HEK293 (cell line): ENCODE measurements at regions of chr15 and their contacts with region 1.

Region 1: GRCh38 chr15:77543159-77543882 is 89.4 kb downstream of the LINGO1 start:
- H3K4me3 ChIP-seq: peak overlapping the region; percentile 44
- H3K27ac ChIP-seq: peak overlapping the region; percentile 54; the same call in 1 of the 2 replicates
- H3K4me1 ChIP-seq: no peaks in the 10 kb centered on the region
- CTCF ChIP-seq: peak; percentile 99

Region 2: DNA sequence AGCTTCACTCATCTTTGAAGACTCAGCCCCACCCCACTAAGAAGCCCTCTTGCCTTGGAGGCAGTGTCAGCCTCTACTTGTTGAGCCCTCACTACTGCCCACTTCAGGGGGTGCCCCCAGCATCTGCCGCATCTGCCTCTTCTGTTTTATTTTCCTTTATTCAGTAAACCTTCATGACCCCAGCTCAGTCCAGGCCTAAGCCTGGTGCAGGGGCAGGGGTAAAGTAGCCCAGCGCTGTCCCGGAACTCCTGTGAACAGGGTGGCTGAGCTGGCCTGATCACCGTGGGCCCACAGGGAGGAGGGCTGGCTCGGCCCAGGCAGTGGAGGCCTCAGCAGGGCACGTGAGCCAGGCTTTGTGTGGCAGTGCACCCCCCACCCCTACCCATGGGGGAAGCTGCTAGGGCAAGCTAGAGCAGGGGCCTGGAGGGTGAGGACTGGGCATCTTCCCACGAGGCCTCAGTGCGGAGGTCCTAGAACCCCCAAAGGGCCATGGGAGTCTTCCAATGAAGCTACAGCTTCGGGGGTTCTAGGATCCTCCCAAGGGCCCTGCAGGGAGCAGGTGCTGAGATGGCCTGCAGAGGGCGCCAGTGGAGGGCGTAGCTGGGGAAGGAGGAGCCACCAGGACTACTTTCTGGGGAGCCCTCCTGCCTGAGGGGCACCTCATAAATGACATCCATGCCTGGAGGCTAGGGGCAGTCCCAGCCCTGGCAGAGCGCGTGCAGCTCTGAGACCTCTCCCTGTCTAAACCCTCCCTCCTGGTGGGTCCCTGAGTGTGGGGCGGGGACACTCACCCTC is 508.4 kb before region 1 on chr15:
- CTCF ChIA-PET with region 1: interaction called, 13 read pairs
- POLR2A ChIA-PET with region 1: no interaction called
- H3K4me3 ChIP-seq: no peak overlapping the region
- H3K27ac ChIP-seq: no peak overlapping the region
- H3K4me1 ChIP-seq: no peaks in the 10 kb centered on the region
- CTCF ChIP-seq: peak; percentile 72

Region 3: DNA sequence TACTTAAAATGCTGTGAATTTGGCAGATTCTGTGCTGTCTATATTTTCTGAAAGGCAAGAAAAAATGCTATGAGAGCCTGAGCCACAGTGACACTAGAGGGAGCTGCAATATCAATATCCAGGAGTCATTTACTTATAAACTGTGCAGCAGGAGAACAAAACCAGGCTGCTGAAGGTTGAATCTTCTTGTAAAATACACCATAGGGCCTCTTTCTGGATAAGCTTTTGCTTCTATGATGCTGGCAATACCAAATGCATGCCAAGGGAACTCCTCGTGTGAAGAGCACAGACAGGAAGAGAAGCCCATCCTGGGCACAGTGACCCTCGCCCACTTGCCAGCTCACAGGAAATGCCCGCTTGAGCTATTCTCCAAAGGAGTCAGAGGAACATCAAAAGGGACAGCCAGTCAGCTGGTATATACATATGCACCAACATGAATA is 424.4 kb before region 1 on chr15:
- CTCF ChIA-PET with region 1: interaction called, 131 read pairs
- POLR2A ChIA-PET with region 1: interaction called, 8 read pairs
- H3K4me3 ChIP-seq: no peak overlapping the region
- H3K27ac ChIP-seq: no peak overlapping the region
- H3K4me1 ChIP-seq: no peaks in the 10 kb centered on the region
- CTCF ChIP-seq: peak; percentile 25; the same call in 1 of the 2 replicates

Region 4: GRCh38 chr15:77186594-77187011 is 356.7 kb before region 1 on chr15:
- CTCF ChIA-PET with region 1: interaction called, 43 read pairs
- POLR2A ChIA-PET with region 1: interaction called, 4 read pairs
- H3K4me3 ChIP-seq: no peak overlapping the region
- H3K27ac ChIP-seq: no peak overlapping the region
- H3K4me1 ChIP-seq: peaks cover 2% of the 10 kb centered on the region; the same call in 1 of the 2 replicates
- CTCF ChIP-seq: peak; percentile 72

Region 5: GRCh38 chr15:77507911-77508310 is 35.4 kb before region 1 on chr15:
- CTCF ChIA-PET with region 1: interaction called, 10 read pairs
- POLR2A ChIA-PET with region 1: no interaction called
- H3K4me3 ChIP-seq: no peak overlapping the region
- H3K27ac ChIP-seq: no peak overlapping the region
- H3K4me1 ChIP-seq: no peaks in the 10 kb centered on the region
- CTCF ChIP-seq: no peak

Region 6: GRCh38 chr15:77568973-77569728 is 25.8 kb after region 1 on chr15:
- CTCF ChIA-PET with region 1: interaction called, 33 read pairs
- POLR2A ChIA-PET with region 1: no interaction called
- H3K4me3 ChIP-seq: no peak overlapping the region
- H3K27ac ChIP-seq: no peak overlapping the region
- H3K4me1 ChIP-seq: peaks cover 4% of the 10 kb centered on the region; the same call in 1 of the 2 replicates
- CTCF ChIP-seq: no peak

Region 7: DNA sequence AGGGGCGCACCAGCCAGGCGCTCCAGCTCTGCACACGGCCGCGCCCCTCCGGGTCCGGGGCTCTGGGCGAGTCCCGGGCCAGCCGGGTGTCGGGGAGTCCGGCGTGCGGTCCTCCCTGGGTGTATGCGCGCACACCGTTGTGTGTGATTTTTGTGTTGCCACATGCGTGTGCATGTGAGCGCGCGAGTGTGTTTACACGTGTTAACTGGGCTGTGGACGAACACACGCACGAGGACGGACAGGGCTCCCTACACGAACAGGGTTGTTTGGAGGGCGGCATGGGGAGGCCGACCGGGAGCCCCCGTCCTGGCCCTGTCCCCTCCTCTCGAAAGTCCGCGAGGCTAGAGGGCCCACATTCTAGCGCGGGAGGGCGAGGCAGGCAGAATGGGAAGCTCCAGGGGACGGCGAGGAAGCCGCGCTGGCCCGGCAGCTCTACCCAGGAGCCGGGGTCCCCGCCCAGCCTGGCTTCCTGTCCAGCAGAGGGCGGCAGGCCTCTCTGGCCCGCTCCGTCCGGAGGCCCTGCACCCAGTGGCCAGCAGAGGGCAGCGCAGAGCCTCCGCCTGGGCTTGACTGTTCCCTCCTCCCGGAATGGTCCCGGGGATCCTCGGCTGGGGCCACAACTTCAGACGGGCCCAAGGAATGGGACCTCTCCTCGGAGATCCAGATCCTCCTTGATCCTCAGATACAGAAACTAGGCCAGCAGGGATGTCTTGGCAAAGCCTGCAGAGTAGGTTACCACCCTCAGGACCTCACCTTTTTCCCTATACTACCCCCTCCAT is 90.0 kb after region 1 on chr15:
- CTCF ChIA-PET with region 1: interaction called, 12 read pairs
- POLR2A ChIA-PET with region 1: no interaction called
- H3K4me3 ChIP-seq: peak overlapping the region; percentile 31
- H3K27ac ChIP-seq: peak overlapping the region; percentile 7; the same call in 1 of the 2 replicates
- H3K4me1 ChIP-seq: no peaks in the 10 kb centered on the region; the same call in 1 of the 2 replicates
- CTCF ChIP-seq: peak; percentile 100

Region 8: GRCh38 chr15:77983708-77984445 is 440.6 kb after region 1 on chr15:
- CTCF ChIA-PET with region 1: no interaction called
- POLR2A ChIA-PET with region 1: no interaction called
- H3K4me3 ChIP-seq: no peak overlapping the region
- H3K27ac ChIP-seq: no peak overlapping the region
- H3K4me1 ChIP-seq: no peaks in the 10 kb centered on the region
- CTCF ChIP-seq: peak; percentile 27; the same call in 1 of the 2 replicates